Posterior vena cava (tissue), 2 donors: ENCODE measurements at regions of chr18 and their contacts with region 1.

Region 1: GRCh38 chr18:24271381-24272331 is 126.0 kb downstream of the OSBPL1A start:
- DNase-seq: peak; percentile 93

Region 2: GRCh38 chr18:24189007-24189528 is 82.6 kb before region 1 on chr18:
- intact Hi-C with region 1: loop called in 1 of 2 experiments (anchors 10 kb)
- DNase-seq: no peak

Region 3: GRCh38 chr18:24219561-24220317 is 51.9 kb before region 1 on chr18:
- intact Hi-C with region 1: loop called in 1 of 2 experiments (anchors 5 kb)
- DNase-seq: no peak